ENCODE measurements at regions of chrX and their contacts with region 1.

Region 1: GRCh38 chrX:48937054-48937907 is 18.5 kb upstream of the PIM2 start:
- DNase-seq: peak; percentile 90
- ATAC-seq: peak; percentile 58
- H3K4me3 ChIP-seq: peak overlapping the region in 4 of 5 experiments; percentile 33 to 57 (median 36)
- H3K4me3 Mint-ChIP-seq: peak overlapping the region; percentile 84
- H3K27ac ChIP-seq: peak overlapping the region; percentile 99
- H3K27ac Mint-ChIP-seq: peak overlapping the region; percentile 99
- H3K4me1 ChIP-seq: peaks cover 91 to 97% of the 10 kb centered on the region in 2 donors
- H3K4me1 Mint-ChIP-seq: peaks cover 82% of the 10 kb centered on the region
- H3K27me3 ChIP-seq: no peaks in the 10 kb centered on the region
- H3K27me3 Mint-ChIP-seq: no peaks in the 10 kb centered on the region
- CTCF ChIP-seq: peak; percentile 67

Region 2: GRCh38 chrX:47815901-47816845 is 1121.1 kb before region 1 on chrX:
- CTCF ChIA-PET with region 1: no interaction called
- POLR2A ChIA-PET with region 1: no interaction called
- intact Hi-C with region 1: no loop called
- DNase-seq: no peak
- ATAC-seq: no peak
- H3K4me3 ChIP-seq: no peak overlapping the region
- H3K4me3 Mint-ChIP-seq: no peak overlapping the region
- H3K27ac ChIP-seq: no peak overlapping the region
- H3K27ac Mint-ChIP-seq: no peak overlapping the region
- H3K4me1 ChIP-seq: no peaks in the 10 kb centered on the region
- H3K4me1 Mint-ChIP-seq: no peaks in the 10 kb centered on the region
- H3K27me3 ChIP-seq: no peaks in the 10 kb centered on the region
- H3K27me3 Mint-ChIP-seq: peaks cover 9% of the 10 kb centered on the region
- CTCF ChIP-seq: no peak

Region 3: GRCh38 chrX:48597353-48598264 is 339.7 kb before region 1 on chrX and contains the start of gene WDR13:
- CTCF ChIA-PET with region 1: no interaction called
- POLR2A ChIA-PET with region 1: no interaction called
- intact Hi-C with region 1: loop called (anchors 5 kb)
- DNase-seq: peak; percentile 91
- ATAC-seq: peak; percentile 76
- H3K4me3 ChIP-seq: peak within 1 kb of the TSS; percentile 55 to 93 (median 75)
- H3K4me3 Mint-ChIP-seq: peak within 1 kb of the TSS; percentile 98
- H3K27ac ChIP-seq: peak within 1 kb of the TSS; percentile 95 to 98
- H3K27ac Mint-ChIP-seq: peak within 1 kb of the TSS; percentile 100
- H3K4me1 ChIP-seq: peaks cover 0 to 12% of the 10 kb centered on the region in 2 donors
- H3K4me1 Mint-ChIP-seq: peaks cover 8% of the 10 kb centered on the region
- H3K27me3 ChIP-seq: no peaks in the 10 kb centered on the region
- H3K27me3 Mint-ChIP-seq: no peaks in the 10 kb centered on the region
- CTCF ChIP-seq: no peak
- total RNA-seq, gene WDR13: 85.1 and 94.6 TPM in 2 replicates

Region 4: GRCh38 chrX:48676106-48676892 is 261.0 kb before region 1 on chrX:
- CTCF ChIA-PET with region 1: no interaction called
- POLR2A ChIA-PET with region 1: interaction called, 3 read pairs
- intact Hi-C with region 1: loop called (anchors 10 kb)
- DNase-seq: peak; percentile 91
- ATAC-seq: peak; percentile 95
- H3K4me3 ChIP-seq: peak overlapping the region; percentile 47 to 75 (median 68)
- H3K4me3 Mint-ChIP-seq: peak overlapping the region; percentile 91
- H3K27ac ChIP-seq: peak overlapping the region; percentile 77 to 85
- H3K27ac Mint-ChIP-seq: peak overlapping the region; percentile 93
- H3K4me1 ChIP-seq: peaks cover 0 to 26% of the 10 kb centered on the region in 2 donors
- H3K4me1 Mint-ChIP-seq: peaks cover 18% of the 10 kb centered on the region
- H3K27me3 ChIP-seq: no peaks in the 10 kb centered on the region
- H3K27me3 Mint-ChIP-seq: no peaks in the 10 kb centered on the region
- CTCF ChIP-seq: no peak

Region 5: GRCh38 chrX:48891402-48892288 is 45.6 kb before region 1 on chrX:
- CTCF ChIA-PET with region 1: interaction called, 30 read pairs
- POLR2A ChIA-PET with region 1: interaction called, 3 read pairs
- intact Hi-C with region 1: loop called (anchors 1 kb)
- DNase-seq: peak; percentile 87
- ATAC-seq: peak; percentile 84
- H3K4me3 ChIP-seq: peak overlapping the region in 4 of 5 experiments; percentile 46 to 65 (median 60)
- H3K4me3 Mint-ChIP-seq: peak overlapping the region; percentile 84
- H3K27ac ChIP-seq: peak overlapping the region in 1 of 2 donors; percentile 48
- H3K27ac Mint-ChIP-seq: peak overlapping the region; percentile 73
- H3K4me1 ChIP-seq: peaks cover 6 to 9% of the 10 kb centered on the region in 2 donors
- H3K4me1 Mint-ChIP-seq: peaks cover 19% of the 10 kb centered on the region
- H3K27me3 ChIP-seq: no peaks in the 10 kb centered on the region
- H3K27me3 Mint-ChIP-seq: no peaks in the 10 kb centered on the region
- CTCF ChIP-seq: peak; percentile 60

Region 6: GRCh38 chrX:48911412-48912182 is 25.7 kb before region 1 on chrX and contains the start of gene SLC35A2:
- CTCF ChIA-PET with region 1: interaction called, 23 read pairs
- POLR2A ChIA-PET with region 1: interaction called, 101 read pairs
- intact Hi-C with region 1: no loop called
- DNase-seq: peak; percentile 90
- ATAC-seq: peak; percentile 76
- H3K4me3 ChIP-seq: peak within 1 kb of the TSS; percentile 60 to 78 (median 66)
- H3K4me3 Mint-ChIP-seq: peak within 1 kb of the TSS; percentile 86
- H3K27ac ChIP-seq: peak within 1 kb of the TSS; percentile 86 to 90
- H3K27ac Mint-ChIP-seq: peak within 1 kb of the TSS; percentile 88
- H3K4me1 ChIP-seq: peaks cover 28 to 49% of the 10 kb centered on the region in 2 donors
- H3K4me1 Mint-ChIP-seq: peaks cover 48% of the 10 kb centered on the region
- H3K27me3 ChIP-seq: no peaks in the 10 kb centered on the region
- H3K27me3 Mint-ChIP-seq: no peaks in the 10 kb centered on the region
- CTCF ChIP-seq: no peak
- total RNA-seq, gene SLC35A2: 19.1 and 24.1 TPM in 2 replicates

Region 7: DNA sequence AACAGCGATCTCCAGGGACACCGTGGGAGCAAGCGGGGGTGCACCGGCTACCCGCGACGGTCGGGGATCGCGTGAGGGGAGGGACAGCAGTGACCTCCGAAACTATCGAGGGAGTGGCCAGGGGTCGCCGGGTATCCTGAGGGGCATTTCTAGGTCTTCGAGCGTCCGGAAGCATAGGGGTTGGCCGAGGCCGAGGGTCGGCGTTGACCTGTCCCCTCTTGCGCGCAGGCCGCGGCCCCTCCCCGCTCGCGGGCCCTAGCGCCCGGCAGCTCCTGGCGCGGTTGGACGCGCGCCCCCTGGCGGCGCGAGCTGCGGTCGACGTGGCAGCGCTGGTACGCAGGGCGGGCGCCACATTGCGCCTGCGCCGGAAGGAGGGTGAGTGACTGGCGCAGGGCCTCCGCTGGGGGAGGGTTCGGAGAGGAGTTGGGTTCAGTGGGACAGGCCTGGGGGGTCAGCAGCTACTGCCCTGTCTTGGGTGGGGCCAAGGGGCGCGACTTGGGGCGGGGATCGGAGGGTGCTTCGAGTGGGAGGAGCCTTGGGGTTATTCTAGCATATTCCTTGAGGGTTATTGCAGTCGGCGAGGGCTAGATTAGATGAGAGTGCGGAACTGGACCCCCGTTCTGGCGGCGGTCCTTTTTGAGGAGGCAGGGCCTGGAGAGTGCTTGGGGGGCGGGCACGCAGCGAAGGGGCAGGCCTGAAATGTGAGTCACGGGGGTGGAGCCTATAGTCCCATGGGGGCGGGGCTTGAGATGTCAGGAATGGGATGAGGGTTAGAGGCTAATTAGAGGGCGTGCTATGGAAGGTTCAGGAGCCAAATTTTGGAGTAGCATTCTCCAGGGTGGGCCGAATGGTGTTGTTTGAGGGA is 226.5 kb after region 1 on chrX:
- CTCF ChIA-PET with region 1: no interaction called
- POLR2A ChIA-PET with region 1: interaction called, 3 read pairs
- intact Hi-C with region 1: loop called (anchors 2 kb)
- DNase-seq: peak; percentile 89
- ATAC-seq: peak; percentile 56
- H3K4me3 ChIP-seq: peak overlapping the region in 4 of 5 experiments; percentile 39 to 62 (median 46)
- H3K4me3 Mint-ChIP-seq: peak overlapping the region; percentile 86
- H3K27ac ChIP-seq: peak overlapping the region; percentile 79 to 82
- H3K27ac Mint-ChIP-seq: peak overlapping the region; percentile 96
- H3K4me1 ChIP-seq: peaks cover 5 to 38% of the 10 kb centered on the region in 2 donors
- H3K4me1 Mint-ChIP-seq: peaks cover 26% of the 10 kb centered on the region
- H3K27me3 ChIP-seq: no peaks in the 10 kb centered on the region
- H3K27me3 Mint-ChIP-seq: no peaks in the 10 kb centered on the region
- CTCF ChIP-seq: peak; percentile 67